ENCODE measurements at regions of chr6 and their contacts with region 1.

Region 1: DNA sequence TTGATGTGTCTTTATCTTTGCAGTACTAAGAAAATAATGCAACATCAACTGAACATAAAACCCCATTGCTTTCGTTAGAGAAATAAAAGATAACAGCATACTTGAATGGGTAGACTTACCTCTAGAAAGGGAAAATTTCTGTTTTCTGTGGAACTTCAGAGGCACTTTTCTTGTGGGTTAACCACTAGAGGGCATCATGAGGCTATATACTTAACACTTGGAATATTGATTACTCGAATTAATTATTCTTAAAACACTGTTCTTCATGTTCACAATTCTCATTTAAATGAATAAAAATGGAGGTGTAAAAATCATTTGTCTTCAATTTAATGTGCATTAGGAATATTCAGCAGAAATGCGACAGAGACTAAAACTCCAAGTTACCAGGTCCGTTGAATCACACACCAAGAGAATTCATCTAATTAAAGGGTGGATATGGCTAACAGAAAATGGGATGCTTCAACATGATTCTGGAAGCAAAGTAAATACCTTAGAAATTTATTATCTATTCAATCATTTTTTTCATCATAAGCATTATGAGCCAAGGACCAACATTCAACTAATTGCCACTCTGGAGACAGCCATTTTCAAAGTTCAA is 330.8 kb upstream of the PREP start:
- DNase-seq: peak in 3 of 14 experiments; percentile 56 to 68 (median 67)
- ATAC-seq: no peak
- H3K4me3 ChIP-seq: no peak overlapping the region
- H3K4me3 Mint-ChIP-seq: no peak overlapping the region
- H3K27ac ChIP-seq: no peak overlapping the region
- H3K27ac Mint-ChIP-seq: no peak overlapping the region
- H3K4me1 ChIP-seq: no peaks in the 10 kb centered on the region
- H3K4me1 Mint-ChIP-seq: peaks cover 13% of the 10 kb centered on the region
- H3K27me3 ChIP-seq: no peaks in the 10 kb centered on the region
- H3K27me3 Mint-ChIP-seq: no peaks in the 10 kb centered on the region
- CTCF ChIP-seq: peak; percentile 84

Region 2: GRCh38 chr6:105431226-105431625 is 302.4 kb before region 1 on chr6:
- CTCF ChIA-PET with region 1: no interaction called
- POLR2A ChIA-PET with region 1: no interaction called
- intact Hi-C with region 1: loop called in 1 of 2 experiments (anchors 1 kb)
- DNase-seq: peak in 4 of 14 experiments; percentile 16 to 68 (median 62)
- ATAC-seq: no peak
- H3K4me3 ChIP-seq: no peak overlapping the region
- H3K4me3 Mint-ChIP-seq: no peak overlapping the region
- H3K27ac ChIP-seq: no peak overlapping the region
- H3K27ac Mint-ChIP-seq: no peak overlapping the region
- H3K4me1 ChIP-seq: no peaks in the 10 kb centered on the region
- H3K4me1 Mint-ChIP-seq: no peaks in the 10 kb centered on the region
- H3K27me3 ChIP-seq: peaks cover 0 to 5% of the 10 kb centered on the region in 2 experiments
- H3K27me3 Mint-ChIP-seq: peaks cover 10% of the 10 kb centered on the region
- CTCF ChIP-seq: peak; percentile 73

Region 3: GRCh38 chr6:105484238-105485161 is 249.2 kb before region 1 on chr6:
- CTCF ChIA-PET with region 1: no interaction called
- POLR2A ChIA-PET with region 1: no interaction called
- intact Hi-C with region 1: loop called in 1 of 2 experiments (anchors 10 kb)
- DNase-seq: peak in 3 of 14 experiments; percentile 50 to 61 (median 56)
- ATAC-seq: peak; percentile 32
- H3K4me3 ChIP-seq: no peak overlapping the region
- H3K4me3 Mint-ChIP-seq: no peak overlapping the region
- H3K27ac ChIP-seq: no peak overlapping the region
- H3K27ac Mint-ChIP-seq: no peak overlapping the region
- H3K4me1 ChIP-seq: no peaks in the 10 kb centered on the region
- H3K4me1 Mint-ChIP-seq: peaks cover 5% of the 10 kb centered on the region
- H3K27me3 ChIP-seq: no peaks in the 10 kb centered on the region
- H3K27me3 Mint-ChIP-seq: peaks cover 20% of the 10 kb centered on the region
- CTCF ChIP-seq: peak; percentile 75

Region 4: DNA sequence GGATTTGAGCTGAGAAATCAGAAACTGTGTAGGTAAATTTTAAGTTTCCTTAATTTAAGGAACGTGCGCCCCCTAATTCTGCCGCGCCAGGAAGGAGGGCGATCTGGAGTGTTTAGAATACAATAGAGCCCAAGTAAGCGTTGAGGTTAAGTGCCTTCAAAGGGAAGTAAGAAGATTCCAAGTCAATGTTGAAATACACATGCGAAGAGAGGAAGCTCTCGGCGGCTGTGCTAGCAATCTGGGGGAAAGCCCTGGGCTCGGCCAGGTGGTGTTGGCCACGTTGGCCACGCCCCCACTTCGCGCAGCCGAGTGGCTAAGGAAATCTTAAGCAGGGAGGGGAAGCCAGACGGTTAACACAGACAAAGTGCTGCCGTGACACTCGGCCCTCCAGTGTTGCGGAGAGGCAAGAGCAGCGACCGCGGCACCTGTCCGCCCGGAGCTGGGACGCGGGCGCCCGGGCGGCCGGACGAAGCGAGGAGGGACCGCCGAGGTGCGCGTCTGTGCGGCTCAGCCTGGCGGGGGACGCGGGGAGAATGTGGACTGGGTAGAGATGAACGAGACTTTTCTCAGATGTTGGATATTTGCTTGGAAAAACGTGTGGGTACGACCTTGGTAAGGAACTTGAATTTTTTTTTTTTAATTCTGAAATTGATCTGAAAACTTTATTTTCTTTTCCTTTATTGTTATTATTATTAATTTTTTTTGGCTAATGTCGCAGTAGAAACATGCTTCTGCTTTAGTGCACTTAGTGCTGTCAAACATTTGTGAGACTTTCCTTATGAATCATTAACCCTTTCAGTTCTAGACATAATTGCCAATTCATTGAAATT is 352.5 kb after region 1 on chr6 and contains the start of gene PRDM1:
- CTCF ChIA-PET with region 1: interaction called, 3 read pairs
- POLR2A ChIA-PET with region 1: no interaction called
- intact Hi-C with region 1: loop called in 1 of 2 experiments (anchors 5 kb)
- DNase-seq: peak; percentile 53 to 96 (median 68)
- ATAC-seq: peak; percentile 83
- H3K4me3 ChIP-seq: peak within 1 kb of the TSS; percentile 62
- H3K4me3 Mint-ChIP-seq: peak within 1 kb of the TSS; percentile 94
- H3K27ac ChIP-seq: peak within 1 kb of the TSS in 1 of 2 donors; percentile 49
- H3K27ac Mint-ChIP-seq: peak within 1 kb of the TSS; percentile 74
- H3K4me1 ChIP-seq: peaks cover 58% of the 10 kb centered on the region
- H3K4me1 Mint-ChIP-seq: peaks cover 80% of the 10 kb centered on the region
- H3K27me3 ChIP-seq: peaks cover 0 to 8% of the 10 kb centered on the region in 2 experiments
- H3K27me3 Mint-ChIP-seq: peaks cover 55% of the 10 kb centered on the region
- CTCF ChIP-seq: peak; percentile 14
- total RNA-seq, gene PRDM1: 69.9 to 83.4 TPM

Region 5: GRCh38 chr6:106377061-106377540 is 643.4 kb after region 1 on chr6:
- CTCF ChIA-PET with region 1: no interaction called
- POLR2A ChIA-PET with region 1: no interaction called
- intact Hi-C with region 1: no loop called
- DNase-seq: no peak
- ATAC-seq: no peak
- H3K4me3 ChIP-seq: no peak overlapping the region
- H3K4me3 Mint-ChIP-seq: no peak overlapping the region
- H3K27ac ChIP-seq: no peak overlapping the region
- H3K27ac Mint-ChIP-seq: no peak overlapping the region
- H3K4me1 ChIP-seq: no peaks in the 10 kb centered on the region
- H3K4me1 Mint-ChIP-seq: no peaks in the 10 kb centered on the region
- H3K27me3 ChIP-seq: no peaks in the 10 kb centered on the region
- H3K27me3 Mint-ChIP-seq: peaks cover 5% of the 10 kb centered on the region
- CTCF ChIP-seq: no peak